Ovary (tissue), 10 donors: ENCODE measurements at regions of chr22 and their contacts with region 1.

Region 1: DNA sequence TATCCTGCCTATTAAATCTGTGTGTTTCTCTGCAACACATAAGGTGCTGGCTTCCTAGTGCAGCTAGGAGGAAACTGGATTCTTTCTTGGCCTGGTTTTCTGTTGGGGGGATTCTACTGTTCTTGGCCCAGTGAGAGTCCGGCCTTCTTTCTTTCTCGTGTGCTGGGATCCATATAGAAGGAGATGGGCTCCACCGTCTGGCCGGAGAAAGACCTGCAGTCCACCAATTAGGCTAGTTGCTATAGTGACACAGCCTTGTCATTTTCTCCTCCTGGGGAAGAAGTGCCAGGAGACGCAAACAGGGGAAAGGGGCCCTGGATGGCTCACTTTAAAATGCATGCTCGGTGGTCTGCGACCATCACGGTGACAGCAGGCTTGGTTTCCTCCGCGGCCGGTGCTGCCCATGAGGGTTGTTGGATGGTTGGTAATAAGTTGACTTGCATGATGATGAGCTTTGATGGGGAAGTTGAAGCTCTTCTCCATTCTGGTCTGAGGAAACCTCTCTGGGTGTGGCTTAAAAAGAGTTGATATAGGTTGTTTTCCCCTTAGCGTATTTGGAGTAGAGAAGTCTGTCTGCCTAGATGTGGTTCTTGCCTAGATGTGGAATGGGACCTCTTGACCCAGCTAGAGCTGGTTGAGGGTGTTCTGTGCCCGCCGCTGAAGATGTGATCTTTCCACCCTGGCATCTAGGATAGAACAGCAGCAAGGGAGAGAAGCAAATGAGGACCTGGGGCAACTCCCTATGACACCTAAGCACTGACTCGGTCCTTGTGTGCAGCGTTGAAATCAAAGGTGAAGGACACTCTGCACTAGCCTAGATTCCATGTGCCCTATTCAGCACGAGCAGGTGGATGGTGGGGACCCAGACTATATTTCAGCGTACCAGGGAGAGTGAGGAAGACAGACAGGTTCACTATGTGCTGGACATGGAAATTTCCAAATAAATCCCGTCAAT is 1335.0 kb downstream of the BRD1 start:
- DNase-seq: peak; percentile 53 to 81 (median 70)
- H3K4me3 ChIP-seq: no peak overlapping the region
- H3K27ac ChIP-seq: no peak overlapping the region
- H3K4me1 ChIP-seq: peaks cover 5% of the 10 kb centered on the region
- H3K27me3 ChIP-seq: no peaks in the 10 kb centered on the region
- CTCF ChIP-seq: peak; percentile 40 to 65 (median 46)
- EP300 ChIP-seq: no peak
- POLR2A ChIP-seq: no peak

Region 2: GRCh38 chr22:46798366-46799350 is 1694.0 kb before region 1 on chr22:
- intact Hi-C with region 1: loop called in 3 of 4 experiments (anchors 5 to 10 kb)
- DNase-seq: peak; percentile 75 to 89 (median 79)
- H3K4me3 ChIP-seq: no peak overlapping the region
- H3K27ac ChIP-seq: no peak overlapping the region
- H3K4me1 ChIP-seq: peaks cover 4% of the 10 kb centered on the region
- H3K27me3 ChIP-seq: no peaks in the 10 kb centered on the region
- CTCF ChIP-seq: peak; percentile 86 to 94 (median 88)
- EP300 ChIP-seq: no peak
- POLR2A ChIP-seq: no peak

Region 3: GRCh38 chr22:46854125-46854870 is 1638.3 kb before region 1 on chr22:
- intact Hi-C with region 1: loop called in 1 of 4 experiments (anchors 10 kb)
- DNase-seq: no peak
- H3K4me3 ChIP-seq: no peak overlapping the region
- H3K27ac ChIP-seq: no peak overlapping the region
- H3K4me1 ChIP-seq: no peaks in the 10 kb centered on the region
- H3K27me3 ChIP-seq: no peaks in the 10 kb centered on the region
- CTCF ChIP-seq: no peak
- EP300 ChIP-seq: no peak
- POLR2A ChIP-seq: no peak

Region 4: DNA sequence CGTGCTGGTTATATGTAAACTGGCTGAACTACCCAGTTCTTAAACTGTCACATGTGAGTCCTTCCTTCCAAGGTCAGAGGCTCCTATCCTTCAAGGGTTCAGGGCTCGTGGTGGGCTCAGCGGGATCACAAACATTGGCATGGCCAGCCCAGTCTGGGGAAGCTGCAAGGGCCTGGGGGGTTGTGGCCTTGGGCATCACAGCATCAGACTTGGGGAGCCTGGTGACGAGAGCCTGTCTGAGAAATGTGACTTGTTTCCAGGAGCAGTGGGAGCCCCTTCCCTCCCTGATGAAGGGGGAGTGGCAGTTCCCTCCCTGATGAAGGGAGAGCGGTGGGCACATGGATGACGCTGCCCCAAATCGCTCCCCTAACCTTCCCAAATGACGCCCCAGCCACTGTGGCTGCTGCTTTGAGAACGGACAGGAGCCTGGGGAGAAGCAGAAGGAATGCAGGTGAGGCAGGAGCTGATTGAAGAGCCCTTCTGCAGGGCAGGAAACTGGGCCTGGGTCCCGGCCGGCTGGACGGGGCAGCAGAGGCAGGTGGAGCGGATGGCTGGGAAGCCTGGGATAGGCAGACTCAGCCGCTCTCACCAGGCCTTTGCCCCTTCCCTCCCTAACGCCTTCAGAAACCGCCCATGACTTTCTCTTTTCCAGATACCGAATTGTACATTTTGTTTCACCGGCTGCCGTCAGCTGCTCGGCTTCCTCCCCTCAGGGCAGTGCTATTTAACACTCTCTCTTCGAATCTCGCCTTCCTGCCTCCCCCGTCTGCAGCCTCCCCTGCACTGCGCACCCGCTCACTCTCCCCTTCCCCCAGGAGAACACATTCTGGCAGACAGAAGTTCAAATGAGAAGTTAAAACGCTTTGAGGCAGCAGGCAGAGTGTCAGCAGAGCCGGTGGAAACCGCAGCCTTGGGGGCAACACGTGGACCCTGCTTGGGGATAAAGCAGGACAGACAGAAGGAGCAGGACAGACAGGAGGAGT is 151.6 kb before region 1 on chr22:
- intact Hi-C with region 1: no loop called
- DNase-seq: peak in 2 of 5 donors; percentile 54 to 55
- H3K4me3 ChIP-seq: no peak overlapping the region
- H3K27ac ChIP-seq: no peak overlapping the region
- H3K4me1 ChIP-seq: peaks cover 6% of the 10 kb centered on the region
- H3K27me3 ChIP-seq: no peaks in the 10 kb centered on the region
- CTCF ChIP-seq: no peak
- EP300 ChIP-seq: no peak
- POLR2A ChIP-seq: no peak